ENCODE measurements at regions of chr16 and their contacts with region 1.

Region 1: DNA sequence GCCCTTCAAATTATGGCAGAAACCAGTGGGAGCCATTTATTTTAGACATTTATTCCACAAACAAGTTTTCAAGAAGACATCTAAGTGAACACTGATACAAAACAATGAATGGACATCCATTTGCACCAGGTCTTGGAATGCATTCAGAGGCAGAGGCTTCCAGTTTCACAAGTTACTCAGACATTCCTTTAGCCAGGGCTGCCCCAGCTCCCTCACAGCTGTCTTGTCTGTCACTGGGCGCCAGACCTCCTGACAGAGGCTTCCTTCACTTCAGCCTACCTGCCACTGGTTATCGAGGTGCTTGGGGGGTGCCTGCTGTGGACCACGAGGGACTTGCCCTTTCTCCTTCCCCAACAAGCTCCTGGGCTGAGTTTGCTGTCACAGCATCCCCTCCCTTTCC is 19.2 kb downstream of the AQP8 start:
- DNase-seq: no peak
- ATAC-seq: no peak
- H3K4me3 Mint-ChIP-seq: no peak overlapping the region
- H3K27ac Mint-ChIP-seq: no peak overlapping the region
- H3K4me1 Mint-ChIP-seq: no peaks in the 10 kb centered on the region
- H3K27me3 Mint-ChIP-seq: no peaks in the 10 kb centered on the region

Region 2: GRCh38 chr16:25224731-25225319 is 11.2 kb before region 1 on chr16:
- CTCF ChIA-PET with region 1: interaction called, 30 read pairs
- POLR2A ChIA-PET with region 1: no interaction called
- intact Hi-C with region 1: no loop called
- DNase-seq: no peak
- ATAC-seq: no peak
- H3K4me3 Mint-ChIP-seq: no peak overlapping the region
- H3K27ac Mint-ChIP-seq: no peak overlapping the region
- H3K4me1 Mint-ChIP-seq: peaks cover 2% of the 10 kb centered on the region
- H3K27me3 Mint-ChIP-seq: no peaks in the 10 kb centered on the region

Region 3: GRCh38 chr16:25257504-25257955 is 21.5 kb after region 1 on chr16 and contains the start of gene ZKSCAN2:
- CTCF ChIA-PET with region 1: interaction called, 6 read pairs
- POLR2A ChIA-PET with region 1: no interaction called
- intact Hi-C with region 1: loop called in 1 of 2 experiments (anchors 1 kb)
- DNase-seq: peak; percentile 92
- ATAC-seq: peak; percentile 82
- H3K4me3 Mint-ChIP-seq: peak within 1 kb of the TSS; percentile 93
- H3K27ac Mint-ChIP-seq: peak within 1 kb of the TSS; percentile 98
- H3K4me1 Mint-ChIP-seq: peaks cover 59% of the 10 kb centered on the region
- H3K27me3 Mint-ChIP-seq: no peaks in the 10 kb centered on the region
- total RNA-seq, gene ZKSCAN2: 5.5 to 5.6 TPM

Region 4: GRCh38 chr16:25265968-25266367 is 30.0 kb after region 1 on chr16:
- CTCF ChIA-PET with region 1: no interaction called
- POLR2A ChIA-PET with region 1: no interaction called
- intact Hi-C with region 1: loop called in 1 of 2 experiments (anchors 5 kb)
- DNase-seq: no peak
- ATAC-seq: no peak
- H3K4me3 Mint-ChIP-seq: no peak overlapping the region
- H3K27ac Mint-ChIP-seq: no peak overlapping the region
- H3K4me1 Mint-ChIP-seq: peaks cover 19% of the 10 kb centered on the region
- H3K27me3 Mint-ChIP-seq: no peaks in the 10 kb centered on the region

Region 5: DNA sequence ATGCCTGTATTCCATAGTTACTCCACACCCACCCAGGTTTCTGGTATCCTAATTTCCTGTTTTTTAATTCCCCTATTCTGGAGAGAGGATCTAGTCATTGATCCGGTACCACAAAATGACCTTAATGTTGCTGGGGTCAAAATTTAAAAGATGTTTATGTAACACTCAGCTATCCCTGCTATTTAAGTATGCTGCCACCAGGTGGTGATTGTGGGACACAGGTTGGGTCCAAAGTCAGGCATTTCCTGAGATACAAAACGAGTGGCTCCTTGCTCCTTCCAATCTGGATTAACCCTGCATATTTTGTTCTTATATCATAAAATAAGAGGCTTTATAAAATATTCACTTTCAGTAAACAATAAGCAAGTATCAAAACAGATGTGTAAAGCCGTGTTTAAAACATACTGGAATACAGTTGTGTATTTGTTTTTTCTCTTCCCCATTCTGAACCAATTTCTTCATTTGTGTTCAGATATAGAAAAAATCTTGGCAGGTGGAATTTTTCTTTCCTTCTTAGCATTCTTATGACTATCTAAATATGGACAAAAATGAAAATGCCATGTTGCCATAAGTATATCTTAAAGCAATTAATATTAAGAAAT is 472.1 kb after region 1 on chr16:
- CTCF ChIA-PET with region 1: no interaction called
- POLR2A ChIA-PET with region 1: no interaction called
- intact Hi-C with region 1: loop called in 1 of 2 experiments (anchors 1 kb)
- DNase-seq: peak; percentile 53
- ATAC-seq: no peak
- H3K4me3 Mint-ChIP-seq: no peak overlapping the region
- H3K27ac Mint-ChIP-seq: no peak overlapping the region
- H3K4me1 Mint-ChIP-seq: no peaks in the 10 kb centered on the region
- H3K27me3 Mint-ChIP-seq: peaks cover 16% of the 10 kb centered on the region